Activated CD4-positive, alpha-beta memory T cell treated with anti-CD3 and anti-CD28 coated beads, Interleukin-2, amount 10 ng/mL, durations not matched to agents 7 days and 5 days (primary cell): ENCODE measurements at regions of chr3 and their contacts with region 1.

Region 1: GRCh38 chr3:57692259-57693147 is at the start of gene DENND6A:
- DNase-seq: peak; percentile 97
- H3K4me3 Mint-ChIP-seq: peak within 1 kb of the TSS; percentile 81
- H3K27ac Mint-ChIP-seq: peak within 1 kb of the TSS; percentile 89
- H3K4me1 Mint-ChIP-seq: peaks cover 39% of the 10 kb centered on the region
- H3K27me3 Mint-ChIP-seq: peaks cover 2% of the 10 kb centered on the region
- total RNA-seq, gene DENND6A: 28.5 to 29.6 TPM

Region 2: GRCh38 chr3:57627976-57628375 is 64.5 kb before region 1 on chr3:
- CTCF ChIA-PET with region 1: no interaction called
- POLR2A ChIA-PET with region 1: no interaction called
- DNase-seq: no peak
- H3K4me3 Mint-ChIP-seq: no peak overlapping the region
- H3K27ac Mint-ChIP-seq: no peak overlapping the region
- H3K4me1 Mint-ChIP-seq: no peaks in the 10 kb centered on the region
- H3K27me3 Mint-ChIP-seq: no peaks in the 10 kb centered on the region

Region 3: DNA sequence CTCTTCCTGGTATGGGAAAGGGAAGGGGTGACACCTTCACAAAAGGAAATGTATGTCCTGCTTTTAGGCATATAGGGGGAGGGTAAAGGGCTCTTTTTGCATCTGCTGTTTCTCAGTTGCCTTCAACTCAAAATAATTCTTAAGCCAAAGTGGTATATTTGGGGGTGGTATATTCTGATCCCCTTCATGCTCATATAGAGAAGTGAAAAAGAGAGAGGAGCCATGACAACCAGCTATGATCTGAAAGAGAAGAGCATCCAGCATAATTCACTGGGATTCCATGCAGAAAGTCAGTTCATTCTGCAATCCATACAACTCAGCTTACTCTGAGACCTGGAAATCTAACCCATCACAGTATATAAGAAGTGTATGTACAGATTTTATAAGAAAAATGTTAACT is 22.0 kb before region 1 on chr3:
- CTCF ChIA-PET with region 1: interaction called, 3 read pairs
- POLR2A ChIA-PET with region 1: interaction called, 12 read pairs
- DNase-seq: no peak
- H3K4me3 Mint-ChIP-seq: no peak overlapping the region
- H3K27ac Mint-ChIP-seq: no peak overlapping the region
- H3K4me1 Mint-ChIP-seq: peaks cover 32% of the 10 kb centered on the region
- H3K27me3 Mint-ChIP-seq: no peaks in the 10 kb centered on the region

Region 4: GRCh38 chr3:57755668-57756527 is 63.4 kb after region 1 on chr3 and contains the start of gene SLMAP:
- CTCF ChIA-PET with region 1: interaction called, 3 read pairs
- POLR2A ChIA-PET with region 1: interaction called, 22 read pairs
- DNase-seq: peak; percentile 97
- H3K4me3 Mint-ChIP-seq: peak within 1 kb of the TSS; percentile 97
- H3K27ac Mint-ChIP-seq: peak within 1 kb of the TSS; percentile 84
- H3K4me1 Mint-ChIP-seq: peaks cover 43% of the 10 kb centered on the region
- H3K27me3 Mint-ChIP-seq: peaks cover 5% of the 10 kb centered on the region
- total RNA-seq, gene SLMAP: 53.4 to 55.6 TPM

Region 5: DNA sequence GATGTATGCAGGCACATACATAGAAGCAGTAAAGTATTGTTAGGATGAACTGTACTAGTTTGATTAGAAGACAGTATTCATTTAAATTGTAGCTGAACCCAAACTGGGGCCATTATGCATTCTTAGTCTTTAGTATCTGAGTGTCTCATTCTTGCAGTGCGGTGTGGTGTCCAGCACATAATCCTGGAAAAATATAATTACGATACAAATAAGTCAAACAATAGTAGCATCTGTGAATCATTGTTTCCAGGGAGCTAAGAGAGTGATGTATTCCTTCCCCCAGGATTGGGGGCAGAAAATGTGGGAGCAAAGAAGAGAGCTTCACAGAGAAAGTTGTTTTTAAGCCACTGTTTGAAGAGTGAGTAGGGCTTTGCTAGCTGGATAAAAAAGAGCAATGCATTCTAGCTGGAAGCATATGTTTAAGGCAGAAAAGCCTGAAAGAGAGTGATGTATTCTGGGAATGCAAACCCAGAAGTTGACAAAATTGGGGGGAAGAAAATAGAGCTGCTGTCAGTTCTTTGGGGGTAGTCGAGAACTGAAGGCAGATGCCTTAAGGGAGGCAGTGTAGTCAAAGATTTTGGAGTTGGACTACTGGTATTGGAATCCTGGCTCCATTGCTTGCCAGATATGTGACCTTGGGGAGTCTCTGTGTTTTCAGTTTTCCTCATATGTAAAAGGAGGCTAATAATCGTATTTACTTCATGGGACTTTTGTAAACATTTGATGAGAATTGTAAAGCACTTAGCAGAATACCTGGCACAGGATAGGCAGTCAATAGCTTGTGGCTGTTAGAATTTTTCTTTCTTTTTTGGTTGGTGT is 77.7 kb after region 1 on chr3:
- CTCF ChIA-PET with region 1: no interaction called
- POLR2A ChIA-PET with region 1: no interaction called
- DNase-seq: no peak
- H3K4me3 Mint-ChIP-seq: no peak overlapping the region
- H3K27ac Mint-ChIP-seq: no peak overlapping the region
- H3K4me1 Mint-ChIP-seq: peaks cover 9% of the 10 kb centered on the region
- H3K27me3 Mint-ChIP-seq: no peaks in the 10 kb centered on the region